GM12878 (cell line): ENCODE measurements at regions of chr5 and their contacts with region 1.

Region 1: GRCh38 chr5:62720031-62720441 is 141.4 kb downstream of the LRRC70 start:
- DNase-seq: peak; percentile 34
- ATAC-seq: peak; percentile 98
- H3K4me3 ChIP-seq: no peak overlapping the region
- H3K27ac ChIP-seq: no peak overlapping the region
- H3K4me1 ChIP-seq: no peaks in the 10 kb centered on the region
- H3K27me3 ChIP-seq: no peaks in the 10 kb centered on the region; a peak in 1 of 4 replicates
- CTCF ChIP-seq: peak; percentile 40 to 64 (median 46)
- EP300 ChIP-seq: peak; percentile 57 to 65; a peak in 2 of 4 replicates
- POLR2A ChIP-seq: no peak
- RAD21 ChIP-seq: peak; percentile 38; the same call in 1 of the 2 replicates

Region 2: GRCh38 chr5:62671479-62671878 is 48.6 kb before region 1 on chr5:
- CTCF ChIA-PET with region 1: no interaction called
- POLR2A ChIA-PET with region 1: no interaction called
- RAD21 ChIA-PET with region 1: no interaction called
- SMC1A ChIA-PET with region 1: no interaction called
- in situ Hi-C with region 1: no loop called
- intact Hi-C with region 1: no loop called
- DNase-seq: no peak
- ATAC-seq: no peak
- H3K4me3 ChIP-seq: no peak overlapping the region
- H3K27ac ChIP-seq: no peak overlapping the region
- H3K4me1 ChIP-seq: no peaks in the 10 kb centered on the region
- H3K27me3 ChIP-seq: no peaks in the 10 kb centered on the region
- CTCF ChIP-seq: no peak
- EP300 ChIP-seq: no peak
- POLR2A ChIP-seq: no peak
- RAD21 ChIP-seq: no peak

Region 3: GRCh38 chr5:62692946-62693713 is 26.9 kb before region 1 on chr5:
- CTCF ChIA-PET with region 1: interaction called, 6 read pairs
- POLR2A ChIA-PET with region 1: interaction called, 8 read pairs
- RAD21 ChIA-PET with region 1: interaction called, 5 read pairs
- SMC1A ChIA-PET with region 1: interaction called, 19 read pairs
- in situ Hi-C with region 1: no loop called
- intact Hi-C with region 1: no loop called
- DNase-seq: no peak
- ATAC-seq: peak; percentile 43; the same call in 2 of the 3 replicates
- H3K4me3 ChIP-seq: no peak overlapping the region
- H3K27ac ChIP-seq: no peak overlapping the region
- H3K4me1 ChIP-seq: peaks cover 4% of the 10 kb centered on the region; the same call in 1 of the 2 replicates
- H3K27me3 ChIP-seq: no peaks in the 10 kb centered on the region
- CTCF ChIP-seq: no peak
- EP300 ChIP-seq: no peak
- POLR2A ChIP-seq: no peak
- RAD21 ChIP-seq: no peak

Region 4: GRCh38 chr5:62731022-62731421 is 11.0 kb after region 1 on chr5:
- CTCF ChIA-PET with region 1: interaction called, 6 read pairs
- POLR2A ChIA-PET with region 1: interaction called, 4 read pairs
- RAD21 ChIA-PET with region 1: interaction called, 6 read pairs
- SMC1A ChIA-PET with region 1: interaction called, 30 read pairs
- in situ Hi-C with region 1: no loop called
- intact Hi-C with region 1: no loop called
- DNase-seq: no peak
- ATAC-seq: peak; percentile 66
- H3K4me3 ChIP-seq: no peak overlapping the region
- H3K27ac ChIP-seq: no peak overlapping the region
- H3K4me1 ChIP-seq: no peaks in the 10 kb centered on the region
- H3K27me3 ChIP-seq: no peaks in the 10 kb centered on the region
- CTCF ChIP-seq: no peak
- EP300 ChIP-seq: no peak
- POLR2A ChIP-seq: no peak
- RAD21 ChIP-seq: no peak

Region 5: DNA sequence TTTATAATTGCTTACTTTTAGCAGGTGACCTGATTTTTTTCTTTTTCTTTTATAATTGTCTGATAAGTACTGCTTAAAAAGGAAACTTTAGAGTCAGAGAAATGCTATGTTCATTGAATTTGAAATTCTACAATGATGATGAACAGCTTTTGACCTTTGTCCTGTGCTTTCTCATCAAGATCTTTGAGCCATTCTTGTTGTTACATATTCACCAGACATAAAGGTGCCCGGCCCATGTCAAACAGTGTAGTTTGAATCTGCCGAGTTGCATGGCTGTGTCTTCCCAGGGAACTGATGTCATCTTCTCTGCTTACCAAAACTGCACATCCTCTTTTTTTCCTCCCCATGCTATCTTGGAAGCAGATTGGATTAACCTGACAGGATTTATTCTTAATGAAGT is 22.2 kb after region 1 on chr5:
- CTCF ChIA-PET with region 1: interaction called, 4 read pairs
- POLR2A ChIA-PET with region 1: no interaction called
- RAD21 ChIA-PET with region 1: interaction called, 3 read pairs
- SMC1A ChIA-PET with region 1: interaction called, 18 read pairs
- in situ Hi-C with region 1: no loop called
- intact Hi-C with region 1: no loop called
- DNase-seq: no peak
- ATAC-seq: no peak
- H3K4me3 ChIP-seq: no peak overlapping the region
- H3K27ac ChIP-seq: no peak overlapping the region
- H3K4me1 ChIP-seq: no peaks in the 10 kb centered on the region
- H3K27me3 ChIP-seq: no peaks in the 10 kb centered on the region
- CTCF ChIP-seq: no peak
- EP300 ChIP-seq: no peak
- POLR2A ChIP-seq: no peak
- RAD21 ChIP-seq: no peak

Region 6: DNA sequence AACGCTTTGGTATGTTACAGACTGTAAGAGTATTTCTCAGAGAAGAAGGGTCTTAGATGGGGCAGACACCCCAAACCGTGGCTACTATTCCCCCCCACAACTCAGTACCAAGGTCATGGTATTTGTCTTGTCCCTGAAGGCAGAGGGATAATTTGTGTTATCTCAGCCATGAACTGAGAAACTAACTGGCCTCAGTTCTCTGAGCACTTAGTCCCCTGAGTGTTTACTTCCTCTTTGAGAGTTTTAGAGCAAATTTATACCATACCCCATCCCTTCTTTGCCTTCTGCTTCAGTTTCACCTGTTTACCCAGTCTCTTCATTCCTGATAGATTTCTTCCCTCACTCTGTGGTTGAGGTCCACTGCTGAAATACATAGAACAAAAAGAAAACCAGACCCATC is 42.5 kb after region 1 on chr5:
- CTCF ChIA-PET with region 1: interaction called, 9 read pairs
- POLR2A ChIA-PET with region 1: interaction called, 3 read pairs
- RAD21 ChIA-PET with region 1: interaction called, 7 read pairs
- SMC1A ChIA-PET with region 1: interaction called, 11 read pairs
- in situ Hi-C with region 1: no loop called
- intact Hi-C with region 1: no loop called
- DNase-seq: no peak
- ATAC-seq: peak; percentile 90
- H3K4me3 ChIP-seq: no peak overlapping the region
- H3K27ac ChIP-seq: no peak overlapping the region
- H3K4me1 ChIP-seq: no peaks in the 10 kb centered on the region
- H3K27me3 ChIP-seq: no peaks in the 10 kb centered on the region
- CTCF ChIP-seq: no peak
- EP300 ChIP-seq: no peak
- POLR2A ChIP-seq: no peak
- RAD21 ChIP-seq: no peak

Region 7: GRCh38 chr5:62779010-62779422 is 59.0 kb after region 1 on chr5:
- CTCF ChIA-PET with region 1: interaction called, 4 read pairs
- POLR2A ChIA-PET with region 1: no interaction called
- RAD21 ChIA-PET with region 1: interaction called, 22 read pairs
- SMC1A ChIA-PET with region 1: interaction called, 4 read pairs
- in situ Hi-C with region 1: no loop called
- intact Hi-C with region 1: no loop called
- DNase-seq: no peak
- ATAC-seq: peak; percentile 87
- H3K4me3 ChIP-seq: no peak overlapping the region
- H3K27ac ChIP-seq: no peak overlapping the region
- H3K4me1 ChIP-seq: no peaks in the 10 kb centered on the region; the same call in 1 of the 2 replicates
- H3K27me3 ChIP-seq: no peaks in the 10 kb centered on the region
- CTCF ChIP-seq: peak; percentile 66 to 70 (median 66)
- EP300 ChIP-seq: no peak
- POLR2A ChIP-seq: no peak
- RAD21 ChIP-seq: peak; percentile 79

Region 8: DNA sequence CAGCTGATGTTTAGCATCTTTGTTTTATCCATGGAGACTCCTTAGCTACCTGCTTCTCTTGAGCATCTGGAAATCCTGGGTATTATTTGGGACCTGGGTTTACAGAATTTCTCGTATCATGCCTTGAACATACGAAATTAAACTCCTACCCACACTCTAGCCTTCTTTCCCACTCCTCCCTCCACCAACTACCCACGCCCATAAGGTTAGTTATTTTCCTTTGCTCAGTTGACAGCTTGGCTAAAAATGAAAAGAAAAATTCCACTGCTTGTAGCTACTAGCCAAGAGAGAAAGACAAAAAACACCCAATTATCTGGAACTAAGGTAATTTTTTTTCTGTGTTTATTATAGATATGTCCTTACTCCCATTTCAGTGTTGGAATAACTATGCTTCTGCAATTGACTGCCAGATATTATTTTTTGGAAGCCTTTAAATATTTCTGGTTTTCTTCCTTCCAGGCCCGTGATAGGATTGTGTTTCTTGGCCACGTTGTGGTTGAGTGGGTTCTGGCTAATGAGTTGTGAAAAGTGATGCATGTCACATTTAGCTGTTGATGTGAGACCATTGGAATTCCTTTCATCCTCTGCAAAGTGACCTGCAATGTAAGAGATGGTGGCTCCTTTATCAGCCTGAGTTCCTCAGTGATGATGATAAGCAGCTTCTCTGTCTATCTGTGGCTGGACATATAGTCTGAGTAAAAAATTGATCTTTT is 166.7 kb after region 1 on chr5:
- CTCF ChIA-PET with region 1: no interaction called
- POLR2A ChIA-PET with region 1: no interaction called
- RAD21 ChIA-PET with region 1: no interaction called
- SMC1A ChIA-PET with region 1: no interaction called
- in situ Hi-C with region 1: no loop called
- intact Hi-C with region 1: no loop called
- DNase-seq: no peak
- ATAC-seq: no peak
- H3K4me3 ChIP-seq: no peak overlapping the region
- H3K27ac ChIP-seq: no peak overlapping the region
- H3K4me1 ChIP-seq: no peaks in the 10 kb centered on the region
- H3K27me3 ChIP-seq: no peaks in the 10 kb centered on the region
- CTCF ChIP-seq: no peak
- EP300 ChIP-seq: no peak
- POLR2A ChIP-seq: no peak
- RAD21 ChIP-seq: no peak